ENCODE measurements at regions of chr9 and their contacts with region 1.

Region 1: DNA sequence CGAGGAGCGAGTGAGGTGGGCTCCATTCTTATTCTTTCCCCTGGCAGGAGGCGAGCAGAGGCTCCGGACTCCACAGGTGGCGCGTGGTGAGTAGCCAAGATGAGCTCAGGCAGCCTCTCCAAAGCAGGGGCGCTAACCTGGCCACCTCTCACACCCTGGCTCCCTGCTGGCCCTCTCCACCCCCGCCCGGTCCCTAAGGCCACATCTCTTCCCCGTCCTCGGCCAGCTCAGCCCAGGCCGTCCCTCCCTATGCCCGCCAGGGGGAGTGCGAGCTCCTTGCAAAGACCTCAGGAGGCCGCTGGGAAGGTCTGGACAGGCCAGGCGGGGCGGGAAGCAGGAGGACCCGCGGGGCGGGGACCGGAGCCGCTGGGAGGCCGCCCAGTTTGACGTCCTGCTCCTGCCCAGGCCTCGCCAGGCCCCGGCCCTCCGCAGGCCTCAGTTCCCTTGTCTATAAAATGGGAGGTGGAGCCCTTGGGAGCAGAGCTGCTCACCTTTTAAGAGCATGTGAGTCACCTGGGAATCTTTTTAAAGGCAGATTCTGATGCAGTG is 46.3 kb upstream of the GGTA1 start:
- DNase-seq: peak; percentile 63
- H3K4me3 ChIP-seq: peak overlapping the region; percentile 23; the same call in 1 of the 2 replicates
- CTCF ChIP-seq: peak; percentile 100

Region 2: GRCh38 chr9:121566481-121567465 is 20.8 kb after region 1 on chr9:
- CTCF ChIA-PET with region 1: interaction called, 15 read pairs
- POLR2A ChIA-PET with region 1: no interaction called
- DNase-seq: no peak
- H3K4me3 ChIP-seq: peak overlapping the region; percentile 54
- CTCF ChIP-seq: no peak

Region 3: DNA sequence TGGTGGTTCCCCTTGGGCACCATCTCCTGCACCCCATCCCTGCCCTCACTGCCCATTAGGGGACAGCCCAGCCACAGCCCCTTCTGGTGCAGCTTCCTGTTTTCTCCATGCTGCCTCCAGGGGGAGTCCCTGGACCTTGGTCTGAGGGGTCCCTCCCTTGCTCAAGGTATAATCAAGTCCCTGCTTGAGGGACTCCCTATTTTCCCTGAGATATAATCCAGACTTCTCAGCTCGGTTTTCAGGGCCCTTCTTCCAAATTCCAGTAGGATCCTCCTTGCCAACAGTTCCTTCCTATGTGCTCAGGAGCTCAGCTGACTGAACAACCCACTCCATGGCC is 75.1 kb after region 1 on chr9:
- CTCF ChIA-PET with region 1: interaction called, 12 read pairs
- POLR2A ChIA-PET with region 1: no interaction called
- DNase-seq: no peak
- H3K4me3 ChIP-seq: no peak overlapping the region
- CTCF ChIP-seq: peak; percentile 64

Region 4: DNA sequence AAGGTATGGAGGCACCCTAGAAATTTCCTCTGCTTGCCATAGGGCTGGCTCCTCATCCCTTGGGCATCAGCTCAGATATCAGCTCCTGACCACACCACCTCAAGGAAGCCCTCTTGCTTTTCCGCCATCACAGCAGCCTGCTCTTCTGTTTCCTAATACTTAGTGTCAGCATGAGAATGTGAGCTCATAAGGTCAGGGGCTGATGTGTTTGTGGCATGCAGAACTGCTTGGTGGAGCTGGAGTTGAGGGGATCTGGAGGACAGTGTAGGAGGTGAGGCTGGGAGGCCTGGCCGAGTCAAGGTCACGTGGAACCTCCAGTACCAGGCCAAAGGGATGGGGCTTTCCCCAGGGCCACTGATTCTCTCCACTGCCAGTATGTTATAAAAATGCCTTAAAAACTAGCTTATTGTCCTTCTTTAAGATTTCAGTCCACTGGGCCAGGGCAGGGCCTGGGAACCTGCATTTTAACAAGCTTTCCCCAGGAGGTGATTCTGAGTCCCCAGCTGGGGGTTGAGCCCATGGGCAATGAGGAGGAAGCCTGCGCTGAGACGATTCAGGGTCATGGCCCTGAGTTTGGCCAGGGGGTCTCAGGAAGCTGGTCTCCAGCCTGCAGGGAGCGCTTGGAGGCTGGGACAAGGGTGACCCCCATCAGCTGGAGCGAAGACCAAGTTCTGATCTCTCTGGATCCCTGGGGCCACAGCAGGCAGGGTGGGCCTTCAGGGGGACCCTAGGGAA is 134.1 kb after region 1 on chr9:
- CTCF ChIA-PET with region 1: interaction called, 97 read pairs
- POLR2A ChIA-PET with region 1: interaction called, 4 read pairs
- DNase-seq: no peak
- H3K4me3 ChIP-seq: no peak overlapping the region
- CTCF ChIP-seq: no peak

Region 5: GRCh38 chr9:121698627-121699570 is 152.9 kb after region 1 on chr9:
- CTCF ChIA-PET with region 1: interaction called, 87 read pairs
- POLR2A ChIA-PET with region 1: no interaction called
- DNase-seq: no peak
- H3K4me3 ChIP-seq: peak overlapping the region; percentile 61
- CTCF ChIP-seq: no peak

Region 6: GRCh38 chr9:122005597-122005996 is 459.6 kb after region 1 on chr9:
- CTCF ChIA-PET with region 1: interaction called, 21 read pairs
- POLR2A ChIA-PET with region 1: no interaction called
- DNase-seq: no peak
- H3K4me3 ChIP-seq: no peak overlapping the region
- CTCF ChIP-seq: peak; percentile 61

Measured in AG04449 (cell line).